Panc1 (cell line): ENCODE measurements at regions of chr20 and their contacts with region 1.

Region 1: DNA sequence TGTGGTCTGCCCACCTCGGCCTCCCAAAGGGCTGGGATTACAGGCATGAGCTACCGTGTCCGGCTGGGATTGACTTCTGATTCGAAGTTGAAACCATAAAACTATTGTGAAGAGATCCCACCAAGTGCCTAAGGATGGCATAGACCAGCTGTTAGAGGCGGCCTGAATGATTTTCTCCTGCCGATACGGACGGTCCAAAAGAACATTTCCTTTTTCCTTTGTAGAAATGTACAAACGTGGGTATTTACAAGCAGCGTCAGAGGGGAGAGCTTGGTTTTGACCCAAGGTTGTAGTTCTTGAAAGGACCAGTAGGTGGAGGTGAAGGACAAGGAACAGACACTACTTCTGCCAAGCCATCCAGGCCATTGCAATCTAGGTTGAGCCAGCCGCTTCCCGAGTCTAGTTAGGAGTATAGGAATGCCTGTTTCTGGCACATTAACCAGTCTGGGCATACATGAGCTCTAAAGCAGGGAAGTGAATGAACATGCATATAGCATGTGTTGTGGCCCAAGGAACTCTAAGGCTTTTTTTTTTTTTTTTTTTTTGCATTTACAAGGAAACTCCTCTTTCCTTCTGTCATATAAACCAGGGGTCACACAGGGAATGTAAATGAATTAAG is 29.1 kb downstream of the MOCS3 start:
- DNase-seq: peak; percentile 91
- ATAC-seq: peak; percentile 96
- H3K4me3 ChIP-seq: peak overlapping the region; percentile 6 to 48; a peak in 3 of 4 replicates
- H3K27ac ChIP-seq: no peak overlapping the region
- H3K4me1 ChIP-seq: no peaks in the 10 kb centered on the region
- H3K27me3 ChIP-seq: no peaks in the 10 kb centered on the region
- CTCF ChIP-seq: peak; percentile 90

Region 2: GRCh38 chr20:50710492-50711063 is 277.1 kb before region 1 on chr20:
- CTCF ChIA-PET with region 1: no interaction called
- POLR2A ChIA-PET with region 1: no interaction called
- in situ Hi-C with region 1: no loop called
- intact Hi-C with region 1: no loop called
- DNase-seq: no peak
- ATAC-seq: no peak
- H3K4me3 ChIP-seq: no peak overlapping the region
- H3K27ac ChIP-seq: peak overlapping the region; percentile 69
- H3K4me1 ChIP-seq: peaks cover 38% of the 10 kb centered on the region
- H3K27me3 ChIP-seq: no peaks in the 10 kb centered on the region
- CTCF ChIP-seq: no peak

Region 3: DNA sequence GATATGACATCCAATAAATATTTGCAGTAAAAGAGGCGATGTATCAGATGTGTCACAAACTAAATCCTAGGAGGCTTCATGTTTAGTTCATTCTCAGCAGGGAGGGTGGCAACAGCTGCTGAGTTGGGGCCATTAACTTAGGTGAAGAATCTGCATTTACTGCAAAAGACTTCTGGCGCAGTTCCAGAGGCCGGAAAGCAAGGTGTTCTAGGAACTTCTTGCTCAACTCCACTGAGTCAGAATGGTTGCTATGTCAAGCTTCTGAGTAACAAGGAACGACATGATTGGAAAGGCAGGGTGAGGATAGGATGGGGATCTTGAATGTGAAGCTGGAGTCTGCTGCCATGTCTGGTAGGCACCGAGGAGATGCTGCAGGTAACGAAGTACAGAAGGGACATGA is 68.1 kb before region 1 on chr20:
- CTCF ChIA-PET with region 1: interaction called, 10 read pairs
- POLR2A ChIA-PET with region 1: interaction called, 5 read pairs
- in situ Hi-C with region 1: no loop called
- intact Hi-C with region 1: no loop called
- DNase-seq: no peak
- ATAC-seq: no peak
- H3K4me3 ChIP-seq: no peak overlapping the region
- H3K27ac ChIP-seq: no peak overlapping the region
- H3K4me1 ChIP-seq: peaks cover 38% of the 10 kb centered on the region
- H3K27me3 ChIP-seq: no peaks in the 10 kb centered on the region
- CTCF ChIP-seq: no peak

Region 4: DNA sequence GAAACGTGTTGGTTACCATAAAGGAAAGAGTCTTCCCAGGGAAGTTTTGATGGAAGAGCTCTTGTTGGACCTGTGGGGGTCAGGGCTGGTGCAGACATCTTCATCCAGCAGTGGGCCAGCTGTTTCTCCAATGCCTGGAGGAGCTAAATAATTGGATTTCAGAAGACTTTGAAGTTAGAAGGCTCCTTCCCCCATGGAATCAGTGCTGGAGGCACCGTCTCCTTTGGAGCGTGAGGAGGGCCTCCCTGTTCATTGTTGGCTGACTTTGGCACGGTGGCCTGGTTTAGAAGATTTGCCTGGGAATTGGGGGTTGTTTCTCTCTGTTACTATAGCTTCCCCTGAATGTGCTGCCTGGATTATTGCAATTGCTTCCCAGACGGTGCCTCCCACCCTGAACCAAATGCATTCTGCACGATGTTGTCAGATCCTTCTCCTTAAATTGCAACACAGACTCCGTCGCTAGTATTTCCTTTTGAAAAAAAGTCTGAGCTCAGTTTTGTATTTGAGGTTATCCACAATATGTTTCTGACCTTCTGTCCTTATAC is 62.9 kb after region 1 on chr20:
- CTCF ChIA-PET with region 1: no interaction called
- POLR2A ChIA-PET with region 1: no interaction called
- in situ Hi-C with region 1: no loop called
- intact Hi-C with region 1: no loop called
- DNase-seq: no peak
- ATAC-seq: no peak
- H3K4me3 ChIP-seq: no peak overlapping the region
- H3K27ac ChIP-seq: no peak overlapping the region
- H3K4me1 ChIP-seq: no peaks in the 10 kb centered on the region
- H3K27me3 ChIP-seq: peaks cover 14% of the 10 kb centered on the region; the same call in 1 of the 2 replicates
- CTCF ChIP-seq: no peak

Region 5: DNA sequence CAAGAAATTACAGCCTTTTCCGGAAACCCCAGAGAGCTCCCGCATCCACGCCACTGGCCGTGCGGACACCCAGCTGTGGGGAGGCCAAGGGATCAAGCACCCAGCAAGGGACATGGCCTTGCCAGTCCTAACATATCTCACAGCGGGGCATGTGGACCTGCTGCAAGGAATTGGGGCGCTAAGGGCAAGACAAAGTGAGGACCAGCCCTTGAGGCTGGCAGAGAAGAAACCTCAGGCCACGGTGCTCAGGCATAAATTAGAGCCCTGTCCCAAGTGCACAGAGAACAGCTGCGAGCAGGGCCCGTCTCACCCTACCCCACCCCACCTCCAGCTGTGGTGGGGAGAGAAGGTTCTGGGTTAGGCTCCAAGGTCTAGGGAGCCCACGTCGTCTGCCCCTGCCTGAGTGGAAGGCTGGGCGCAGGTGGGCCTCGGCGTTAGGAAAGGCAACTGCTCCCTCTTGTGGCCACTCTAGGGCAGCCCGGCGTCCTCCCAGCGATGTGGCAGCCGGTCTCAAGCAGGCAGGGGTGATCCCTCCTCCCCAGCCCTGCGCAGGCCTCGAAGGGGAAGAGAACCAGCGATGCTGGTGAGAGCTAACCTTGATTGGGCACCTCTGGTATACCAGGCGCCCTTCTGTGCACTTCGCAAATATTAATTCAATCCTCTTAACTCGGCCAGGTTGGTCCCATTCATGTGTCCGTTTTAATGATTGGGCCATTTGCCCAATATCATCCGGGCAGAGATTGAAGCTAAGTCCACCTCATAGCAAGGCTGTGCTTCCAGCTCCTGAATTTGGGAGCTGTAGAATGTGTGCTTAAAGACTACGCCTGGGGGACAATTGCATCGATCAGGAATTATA is 319.0 kb after region 1 on chr20:
- CTCF ChIA-PET with region 1: interaction called, 37 read pairs
- POLR2A ChIA-PET with region 1: no interaction called
- in situ Hi-C with region 1: no loop called
- intact Hi-C with region 1: loop called (anchors 2 kb)
- DNase-seq: peak; percentile 45
- ATAC-seq: peak; percentile 100
- H3K4me3 ChIP-seq: no peak overlapping the region
- H3K27ac ChIP-seq: no peak overlapping the region
- H3K4me1 ChIP-seq: no peaks in the 10 kb centered on the region
- H3K27me3 ChIP-seq: no peaks in the 10 kb centered on the region
- CTCF ChIP-seq: peak; percentile 91

Region 6: GRCh38 chr20:51380401-51381385 is 393.0 kb after region 1 on chr20:
- CTCF ChIA-PET with region 1: interaction called, 13 read pairs
- POLR2A ChIA-PET with region 1: no interaction called
- in situ Hi-C with region 1: no loop called
- intact Hi-C with region 1: no loop called
- DNase-seq: no peak
- ATAC-seq: no peak
- H3K4me3 ChIP-seq: no peak overlapping the region
- H3K27ac ChIP-seq: no peak overlapping the region
- H3K4me1 ChIP-seq: no peaks in the 10 kb centered on the region
- H3K27me3 ChIP-seq: no peaks in the 10 kb centered on the region
- CTCF ChIP-seq: no peak

Region 7: GRCh38 chr20:51456511-51457509 is 469.1 kb after region 1 on chr20:
- CTCF ChIA-PET with region 1: interaction called, 11 read pairs
- POLR2A ChIA-PET with region 1: no interaction called
- in situ Hi-C with region 1: no loop called
- intact Hi-C with region 1: no loop called
- DNase-seq: peak; percentile 89
- ATAC-seq: peak; percentile 94
- H3K4me3 ChIP-seq: peak overlapping the region; percentile 23 to 55
- H3K27ac ChIP-seq: peak overlapping the region; percentile 97
- H3K4me1 ChIP-seq: peaks cover 42% of the 10 kb centered on the region
- H3K27me3 ChIP-seq: no peaks in the 10 kb centered on the region
- CTCF ChIP-seq: no peak

Region 8: DNA sequence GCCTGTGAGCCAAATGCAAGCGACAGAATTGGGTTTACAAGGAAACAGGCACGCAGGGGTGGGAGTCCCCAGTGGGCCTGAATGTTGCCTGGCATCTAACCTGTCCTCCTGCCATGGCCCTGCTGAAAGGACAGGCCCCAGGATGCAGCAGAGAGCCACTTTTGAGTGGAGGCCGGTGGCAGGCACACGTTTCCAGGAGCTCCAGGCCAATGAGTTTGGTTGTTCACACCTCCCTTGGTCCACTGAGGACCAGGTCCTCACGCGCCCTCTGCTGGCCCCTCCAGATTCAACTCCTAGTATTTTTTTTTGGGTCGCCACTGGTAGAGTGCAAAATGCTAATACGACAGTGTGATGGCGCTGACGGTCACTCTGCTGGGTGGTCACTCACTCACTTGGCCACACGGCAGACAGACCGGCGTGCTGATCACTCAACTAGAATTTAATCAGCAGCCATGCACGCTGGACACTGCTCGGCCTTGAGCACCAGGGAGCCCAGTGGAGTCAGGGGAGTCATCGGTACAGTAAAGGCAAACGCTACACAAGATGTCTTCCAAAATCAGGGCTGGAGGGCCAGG is 636.5 kb after region 1 on chr20:
- CTCF ChIA-PET with region 1: no interaction called
- POLR2A ChIA-PET with region 1: no interaction called
- in situ Hi-C with region 1: no loop called
- intact Hi-C with region 1: loop called (anchors 10 kb)
- DNase-seq: no peak
- ATAC-seq: peak; percentile 85
- H3K4me3 ChIP-seq: no peak overlapping the region
- H3K27ac ChIP-seq: no peak overlapping the region
- H3K4me1 ChIP-seq: no peaks in the 10 kb centered on the region
- H3K27me3 ChIP-seq: no peaks in the 10 kb centered on the region
- CTCF ChIP-seq: peak; percentile 91